ENCODE measurements at regions of chr3 and their contacts with region 1.

Region 1: GRCh38 chr3:136075218-136075808 is 109.8 kb downstream of the PPP2R3A start:
- DNase-seq: peak; percentile 76
- H3K4me3 ChIP-seq: no peak overlapping the region
- H3K27ac ChIP-seq: no peak overlapping the region
- H3K4me1 ChIP-seq: no peaks in the 10 kb centered on the region
- CTCF ChIP-seq: peak; percentile 99

Region 2: DNA sequence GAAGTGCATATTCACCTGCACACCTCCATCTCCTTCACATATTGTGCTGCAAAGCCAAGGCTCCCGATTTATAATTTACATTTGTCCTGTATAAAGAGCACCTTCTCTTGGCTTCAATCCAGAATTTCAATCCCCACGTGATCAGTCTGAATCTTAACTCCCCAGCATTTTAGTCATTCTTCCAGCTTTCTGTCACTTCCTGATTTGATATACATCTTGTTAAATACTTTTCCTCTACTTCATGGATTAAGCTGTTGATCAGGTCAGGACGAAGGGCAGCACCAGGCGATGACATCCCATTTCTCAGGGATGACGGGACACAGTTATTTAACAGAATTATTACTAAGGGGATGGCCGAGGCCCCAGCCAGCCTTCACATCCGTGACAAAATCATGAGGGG is 1067.7 kb before region 1 on chr3:
- CTCF ChIA-PET with region 1: no interaction called
- POLR2A ChIA-PET with region 1: no interaction called
- intact Hi-C with region 1: no loop called
- DNase-seq: no peak
- H3K4me3 ChIP-seq: no peak overlapping the region
- H3K27ac ChIP-seq: no peak overlapping the region
- H3K4me1 ChIP-seq: no peaks in the 10 kb centered on the region
- CTCF ChIP-seq: no peak

Region 3: GRCh38 chr3:136250226-136250902 is 175.1 kb after region 1 on chr3 and contains the start of gene PCCB:
- CTCF ChIA-PET with region 1: no interaction called
- POLR2A ChIA-PET with region 1: interaction called, 4 read pairs
- intact Hi-C with region 1: loop called (anchors 5 kb)
- DNase-seq: peak; percentile 96
- H3K4me3 ChIP-seq: peak within 1 kb of the TSS; percentile 71
- H3K27ac ChIP-seq: peak within 1 kb of the TSS; percentile 83
- H3K4me1 ChIP-seq: peaks cover 61% of the 10 kb centered on the region
- CTCF ChIP-seq: peak; percentile 78
- total RNA-seq, gene PCCB: 38.3 and 39.7 TPM in 2 replicates

Region 4: GRCh38 chr3:136346486-136346885 is 271.2 kb after region 1 on chr3:
- CTCF ChIA-PET with region 1: no interaction called
- POLR2A ChIA-PET with region 1: interaction called, 4 read pairs
- intact Hi-C with region 1: loop called (anchors 5 kb)
- DNase-seq: no peak
- H3K4me3 ChIP-seq: no peak overlapping the region
- H3K27ac ChIP-seq: no peak overlapping the region
- H3K4me1 ChIP-seq: no peaks in the 10 kb centered on the region
- CTCF ChIP-seq: no peak

Region 5: DNA sequence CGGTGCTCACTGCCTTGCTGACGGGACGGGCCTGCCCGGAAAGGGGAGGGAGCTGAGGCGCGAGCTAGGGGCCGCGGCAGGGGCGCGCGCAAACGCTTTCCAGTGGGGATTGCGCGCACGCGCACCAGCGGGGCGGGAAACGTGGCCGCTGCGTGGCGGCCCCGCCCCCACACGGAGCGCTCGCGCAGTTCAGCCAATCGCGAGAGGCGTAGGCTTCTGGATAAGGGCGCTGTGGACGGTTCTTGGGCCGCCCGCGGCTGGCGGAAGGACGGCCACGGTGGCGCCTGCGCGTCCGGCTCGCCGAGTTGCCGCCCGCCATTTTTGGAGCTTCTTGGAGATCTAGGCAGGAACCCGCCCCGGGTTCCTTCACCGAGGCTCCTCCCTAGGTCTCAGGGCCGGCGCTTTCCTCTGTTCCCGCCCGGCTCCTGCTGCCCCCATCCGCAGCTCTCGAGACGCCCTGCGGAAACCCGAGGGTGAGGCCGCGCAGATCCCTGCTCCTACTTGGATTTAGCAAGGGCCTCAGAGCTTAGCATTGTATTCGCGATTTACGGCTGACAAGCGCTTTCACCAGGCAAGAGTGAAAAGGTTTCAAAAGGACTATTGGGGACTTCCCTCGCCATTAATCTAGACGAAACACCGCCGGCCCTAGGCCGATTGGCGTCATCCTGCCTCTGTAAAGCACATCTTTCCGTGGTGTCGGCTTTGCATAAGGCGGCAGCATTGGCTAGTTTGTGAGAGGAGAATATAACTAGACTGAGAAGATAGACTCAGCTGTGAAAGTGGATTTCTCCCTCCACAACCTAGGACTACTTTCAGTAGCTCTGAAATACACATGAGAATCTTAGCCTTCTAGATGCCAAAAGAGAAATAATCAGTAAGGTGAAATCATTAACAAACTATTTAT is 677.4 kb after region 1 on chr3:
- CTCF ChIA-PET with region 1: interaction called, 5 read pairs
- POLR2A ChIA-PET with region 1: interaction called, 6 read pairs
- intact Hi-C with region 1: loop called (anchors 1 kb)
- DNase-seq: peak; percentile 99
- H3K4me3 ChIP-seq: peak overlapping the region; percentile 90
- H3K27ac ChIP-seq: peak overlapping the region; percentile 94
- H3K4me1 ChIP-seq: peaks cover 33% of the 10 kb centered on the region
- CTCF ChIP-seq: no peak; the same call in 1 of the 2 replicates

Region 6: DNA sequence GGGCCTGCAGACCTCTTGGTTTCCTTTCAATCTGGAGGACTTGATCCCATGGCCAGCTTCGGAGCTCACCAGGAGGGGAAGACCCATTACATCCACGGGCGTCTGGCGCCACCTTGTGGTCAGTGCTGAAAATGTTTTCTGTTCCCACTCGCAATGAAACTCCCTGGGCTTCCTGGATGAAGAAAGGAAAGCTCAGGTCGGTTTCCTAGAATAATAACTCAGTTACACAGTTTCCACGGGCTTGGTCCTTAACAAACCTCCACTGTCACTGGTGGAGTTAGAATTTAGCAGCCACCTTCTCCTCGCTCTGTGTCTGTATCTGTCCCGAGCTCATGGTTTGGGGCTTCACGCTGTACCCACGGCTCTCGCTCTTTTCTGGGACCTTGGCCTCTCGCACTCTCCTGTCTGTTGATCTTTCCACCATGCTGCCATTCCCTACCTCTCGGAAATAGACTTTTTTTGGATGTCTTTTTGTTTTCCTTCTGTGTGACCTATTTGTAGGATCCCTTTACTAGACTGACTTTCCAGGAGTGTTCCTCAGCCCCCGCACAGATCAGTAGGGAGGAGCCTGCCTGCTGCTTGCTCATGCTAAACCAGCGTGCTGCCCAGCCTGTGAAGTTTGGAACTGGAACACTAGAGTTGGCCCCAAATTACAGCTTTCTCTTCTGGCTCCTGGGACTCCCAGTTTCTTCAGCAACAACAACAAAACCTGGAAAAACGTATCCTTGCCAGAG is 938.8 kb after region 1 on chr3:
- CTCF ChIA-PET with region 1: interaction called, 4 read pairs
- POLR2A ChIA-PET with region 1: no interaction called
- intact Hi-C with region 1: loop called (anchors 1 kb)
- DNase-seq: peak; percentile 84
- H3K4me3 ChIP-seq: no peak overlapping the region
- H3K27ac ChIP-seq: no peak overlapping the region
- H3K4me1 ChIP-seq: no peaks in the 10 kb centered on the region
- CTCF ChIP-seq: peak; percentile 95

Measured in OCI-LY7 (cell line).